GM10248 (cell line): ENCODE measurements at regions of chr21 and their contacts with region 1.

Region 1: GRCh38 chr21:34122047-34122446 is 48.7 kb downstream of the MRPS6 start:
- DNase-seq: no peak
- CTCF ChIP-seq: no peak

Region 2: DNA sequence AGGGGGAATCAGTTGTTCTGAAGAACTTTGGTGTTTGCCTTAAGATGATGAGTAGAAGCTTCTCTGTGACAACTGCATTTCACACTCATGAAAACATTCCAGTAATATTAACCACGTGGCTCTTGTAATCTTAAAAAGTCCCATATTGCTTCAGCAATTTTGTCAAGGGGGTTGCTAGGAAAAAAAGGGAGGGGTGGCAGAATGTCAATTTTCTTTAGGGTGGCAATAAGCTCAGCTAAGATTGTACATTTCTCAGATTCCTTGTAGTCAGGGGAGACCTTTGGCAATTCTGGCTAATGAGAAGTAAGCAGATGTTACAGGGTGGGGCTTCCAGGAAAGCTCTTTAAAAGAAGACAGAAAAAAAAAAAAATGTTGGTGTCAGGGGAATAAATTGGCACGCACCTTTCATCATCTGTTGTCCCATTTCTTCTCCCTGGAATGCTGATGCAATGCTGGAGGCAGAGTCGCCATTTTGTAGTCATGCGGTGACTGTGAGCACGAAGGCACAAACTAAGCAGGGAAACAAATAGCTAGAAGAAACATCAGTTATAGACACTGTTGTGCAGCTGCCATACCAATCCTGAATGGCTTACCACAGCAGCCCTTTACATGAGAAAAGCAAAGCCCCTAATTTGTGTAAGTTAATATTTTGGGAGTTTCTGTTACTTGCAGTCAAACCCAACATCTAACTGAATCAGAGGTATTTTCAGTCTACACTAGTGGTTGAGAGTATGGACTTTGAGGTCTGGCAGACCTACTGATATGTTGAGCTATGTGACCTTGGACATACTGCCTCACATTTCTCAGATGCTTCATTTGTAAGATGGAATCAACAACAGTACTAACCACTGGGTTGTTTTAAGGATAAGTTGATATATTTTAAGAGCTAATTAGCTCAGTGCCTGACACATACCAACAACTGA is 104.7 kb before region 1 on chr21:
- CTCF ChIA-PET with region 1: no interaction called
- POLR2A ChIA-PET with region 1: no interaction called
- DNase-seq: peak; percentile 32
- CTCF ChIP-seq: no peak

Region 3: DNA sequence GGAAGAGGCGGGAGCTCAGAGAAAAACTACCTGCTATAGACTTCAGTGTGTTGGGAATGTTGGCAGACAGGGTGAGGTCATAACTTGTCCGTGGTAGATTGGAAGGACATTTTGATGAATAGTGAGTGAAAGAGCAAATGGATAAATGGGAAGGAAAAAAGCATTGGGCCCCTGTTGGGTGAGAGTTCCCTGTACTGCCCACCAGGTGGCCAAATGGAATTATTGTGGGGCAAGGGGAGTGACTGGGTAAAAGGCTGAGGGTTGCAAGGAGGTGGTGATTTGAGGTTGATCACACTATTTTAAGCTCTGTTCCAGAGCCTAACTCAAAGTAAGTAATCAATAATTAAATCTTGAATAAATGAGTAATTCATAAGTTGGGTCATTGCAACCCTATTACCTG is 11.8 kb after region 1 on chr21:
- CTCF ChIA-PET with region 1: interaction called, 11 read pairs
- POLR2A ChIA-PET with region 1: no interaction called
- DNase-seq: no peak
- CTCF ChIP-seq: no peak

Region 4: DNA sequence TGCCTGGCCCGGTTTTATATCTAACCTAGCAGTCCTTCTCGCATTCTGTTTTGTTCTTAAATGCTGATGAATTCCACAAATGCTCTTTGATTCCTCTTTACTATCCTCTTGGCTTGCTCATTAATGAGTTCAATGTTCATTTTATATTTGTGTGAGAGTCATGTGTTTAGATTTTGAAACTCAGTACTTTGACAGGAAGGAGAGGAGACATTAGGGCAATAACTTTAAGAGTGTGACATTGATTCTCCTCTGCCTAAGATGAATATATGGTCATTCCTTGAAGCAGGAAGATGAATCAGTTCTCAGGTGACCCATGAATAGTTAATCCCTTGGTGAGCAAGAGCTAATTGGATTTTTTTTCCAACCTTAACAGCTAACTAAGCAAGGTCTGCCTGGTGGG is 35.5 kb after region 1 on chr21:
- CTCF ChIA-PET with region 1: no interaction called
- POLR2A ChIA-PET with region 1: no interaction called
- DNase-seq: no peak
- CTCF ChIP-seq: no peak